Naive thymus-derived CD4-positive, alpha-beta T cell (primary cell): ENCODE measurements at regions of chr6 and their contacts with region 1.

Region 1: GRCh38 chr6:159693128-159693893 is at the start of gene SOD2:
- DNase-seq: peak; percentile 75 to 92 (median 85)
- ATAC-seq: peak; percentile 84
- H3K4me3 ChIP-seq: peak within 1 kb of the TSS; percentile 63
- H3K4me3 Mint-ChIP-seq: peak within 1 kb of the TSS; percentile 74 to 97 (median 94)
- H3K27ac ChIP-seq: peak within 1 kb of the TSS; percentile 90
- H3K27ac Mint-ChIP-seq: peak within 1 kb of the TSS; percentile 94 to 98 (median 97)
- H3K4me1 ChIP-seq: peaks cover 18 to 31% of the 10 kb centered on the region in 2 donors
- H3K4me1 Mint-ChIP-seq: peaks cover 31 to 62% (median 44%) of the 10 kb centered on the region in 7 donors
- H3K27me3 ChIP-seq: no peaks in the 10 kb centered on the region
- H3K27me3 Mint-ChIP-seq: no peaks in the 10 kb centered on the region
- total RNA-seq, gene SOD2: 80.2 to 306 (median 105) TPM

Region 2: GRCh38 chr6:157921685-157922367 is 1771.5 kb before region 1 on chr6:
- CTCF ChIA-PET with region 1: no interaction called
- POLR2A ChIA-PET with region 1: no interaction called
- intact Hi-C with region 1: no loop called
- DNase-seq: no peak
- ATAC-seq: no peak
- H3K4me3 ChIP-seq: no peak overlapping the region
- H3K4me3 Mint-ChIP-seq: no peak overlapping the region
- H3K27ac ChIP-seq: no peak overlapping the region
- H3K27ac Mint-ChIP-seq: no peak overlapping the region
- H3K4me1 ChIP-seq: no peaks in the 10 kb centered on the region
- H3K4me1 Mint-ChIP-seq: peaks cover 0 to 4% (median 0%) of the 10 kb centered on the region in 7 donors
- H3K27me3 ChIP-seq: no peaks in the 10 kb centered on the region
- H3K27me3 Mint-ChIP-seq: no peaks in the 10 kb centered on the region

Region 3: DNA sequence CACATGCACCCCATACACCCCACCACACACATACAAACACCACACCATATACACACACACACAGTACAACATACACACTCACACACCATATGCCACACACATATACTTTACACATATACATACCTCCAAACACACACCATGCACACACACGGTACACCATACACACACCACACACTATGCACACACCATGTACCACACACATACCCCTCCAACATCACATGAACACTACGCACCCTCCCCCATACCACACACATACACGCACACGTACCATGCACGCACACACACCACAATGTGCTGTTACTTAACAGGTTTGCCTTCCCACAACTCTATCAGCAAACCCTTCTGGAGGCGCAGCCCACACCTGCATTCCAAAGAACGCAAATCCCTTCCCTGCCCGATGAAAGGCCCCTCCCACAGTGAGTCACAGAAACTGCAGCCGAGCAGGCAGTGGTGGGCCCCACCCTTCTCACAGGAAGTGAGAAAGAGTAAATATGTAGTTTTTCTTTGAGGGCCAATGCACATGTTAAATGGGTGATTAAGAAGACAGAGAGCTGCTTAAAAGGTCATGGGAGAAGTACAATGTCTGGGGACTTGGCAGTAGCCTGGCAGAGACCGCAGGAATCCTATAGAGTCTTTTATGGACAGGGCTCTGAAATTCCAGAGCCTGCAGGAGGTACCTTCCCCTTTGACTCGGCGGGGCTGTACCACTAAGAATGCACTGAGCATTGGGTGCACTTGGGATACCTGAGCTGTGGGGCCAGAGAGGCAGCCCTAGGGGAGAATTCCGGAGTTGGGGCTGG is 840.0 kb before region 1 on chr6:
- CTCF ChIA-PET with region 1: no interaction called
- POLR2A ChIA-PET with region 1: no interaction called
- intact Hi-C with region 1: loop called in 1 of 2 experiments (anchors 2 kb)
- DNase-seq: peak; percentile 54 to 93 (median 86)
- ATAC-seq: peak; percentile 79
- H3K4me3 ChIP-seq: peak overlapping the region; percentile 55
- H3K4me3 Mint-ChIP-seq: no peak overlapping the region
- H3K27ac ChIP-seq: peak overlapping the region; percentile 83
- H3K27ac Mint-ChIP-seq: no peak overlapping the region
- H3K4me1 ChIP-seq: peaks cover 47 to 55% of the 10 kb centered on the region in 2 donors
- H3K4me1 Mint-ChIP-seq: peaks cover 16 to 42% (median 33%) of the 10 kb centered on the region in 7 donors
- H3K27me3 ChIP-seq: no peaks in the 10 kb centered on the region
- H3K27me3 Mint-ChIP-seq: no peaks in the 10 kb centered on the region

Region 4: DNA sequence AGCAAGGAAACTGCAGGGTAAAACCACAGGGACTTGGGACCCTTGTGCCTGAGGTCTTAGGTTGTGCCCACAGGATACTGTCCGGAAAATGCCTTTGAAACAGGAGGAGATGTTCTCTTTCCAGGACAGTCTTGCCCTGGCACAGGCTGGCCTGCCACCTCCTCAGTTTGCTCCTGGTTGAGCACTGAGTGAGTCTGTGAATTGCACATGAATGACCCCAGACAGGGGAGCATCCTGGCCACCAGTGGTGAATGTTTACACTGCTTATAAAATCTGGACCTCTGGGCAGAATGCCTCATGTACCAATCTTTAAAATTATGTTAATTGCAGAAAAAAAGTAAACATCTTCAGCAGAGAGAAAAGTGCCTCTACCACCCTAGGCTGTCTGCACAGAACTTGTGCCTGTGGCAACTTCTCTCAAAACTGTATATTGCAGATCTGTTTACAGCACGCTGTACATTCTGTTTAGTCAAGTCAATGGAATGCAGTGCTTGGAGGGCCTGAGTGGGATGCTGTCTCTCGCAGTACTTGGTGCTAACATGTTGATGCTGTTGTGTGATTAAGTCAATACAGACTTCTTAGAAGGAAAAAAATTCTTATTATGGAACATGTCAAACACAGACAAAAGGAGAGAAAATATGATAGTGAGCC is 242.4 kb before region 1 on chr6:
- CTCF ChIA-PET with region 1: no interaction called
- POLR2A ChIA-PET with region 1: no interaction called
- intact Hi-C with region 1: no loop called
- DNase-seq: no peak
- ATAC-seq: peak; percentile 12
- H3K4me3 ChIP-seq: no peak overlapping the region
- H3K4me3 Mint-ChIP-seq: no peak overlapping the region
- H3K27ac ChIP-seq: no peak overlapping the region
- H3K27ac Mint-ChIP-seq: no peak overlapping the region
- H3K4me1 ChIP-seq: no peaks in the 10 kb centered on the region
- H3K4me1 Mint-ChIP-seq: no peaks in the 10 kb centered on the region
- H3K27me3 ChIP-seq: no peaks in the 10 kb centered on the region
- H3K27me3 Mint-ChIP-seq: peaks cover 4 to 44% (median 27%) of the 10 kb centered on the region in 5 donors

Region 5: GRCh38 chr6:159633196-159633595 is 60.1 kb before region 1 on chr6:
- CTCF ChIA-PET with region 1: no interaction called
- POLR2A ChIA-PET with region 1: no interaction called
- intact Hi-C with region 1: no loop called
- DNase-seq: no peak
- ATAC-seq: no peak
- H3K4me3 ChIP-seq: no peak overlapping the region
- H3K4me3 Mint-ChIP-seq: no peak overlapping the region
- H3K27ac ChIP-seq: no peak overlapping the region
- H3K27ac Mint-ChIP-seq: no peak overlapping the region
- H3K4me1 ChIP-seq: no peaks in the 10 kb centered on the region
- H3K4me1 Mint-ChIP-seq: no peaks in the 10 kb centered on the region
- H3K27me3 ChIP-seq: no peaks in the 10 kb centered on the region
- H3K27me3 Mint-ChIP-seq: no peaks in the 10 kb centered on the region

Region 6: DNA sequence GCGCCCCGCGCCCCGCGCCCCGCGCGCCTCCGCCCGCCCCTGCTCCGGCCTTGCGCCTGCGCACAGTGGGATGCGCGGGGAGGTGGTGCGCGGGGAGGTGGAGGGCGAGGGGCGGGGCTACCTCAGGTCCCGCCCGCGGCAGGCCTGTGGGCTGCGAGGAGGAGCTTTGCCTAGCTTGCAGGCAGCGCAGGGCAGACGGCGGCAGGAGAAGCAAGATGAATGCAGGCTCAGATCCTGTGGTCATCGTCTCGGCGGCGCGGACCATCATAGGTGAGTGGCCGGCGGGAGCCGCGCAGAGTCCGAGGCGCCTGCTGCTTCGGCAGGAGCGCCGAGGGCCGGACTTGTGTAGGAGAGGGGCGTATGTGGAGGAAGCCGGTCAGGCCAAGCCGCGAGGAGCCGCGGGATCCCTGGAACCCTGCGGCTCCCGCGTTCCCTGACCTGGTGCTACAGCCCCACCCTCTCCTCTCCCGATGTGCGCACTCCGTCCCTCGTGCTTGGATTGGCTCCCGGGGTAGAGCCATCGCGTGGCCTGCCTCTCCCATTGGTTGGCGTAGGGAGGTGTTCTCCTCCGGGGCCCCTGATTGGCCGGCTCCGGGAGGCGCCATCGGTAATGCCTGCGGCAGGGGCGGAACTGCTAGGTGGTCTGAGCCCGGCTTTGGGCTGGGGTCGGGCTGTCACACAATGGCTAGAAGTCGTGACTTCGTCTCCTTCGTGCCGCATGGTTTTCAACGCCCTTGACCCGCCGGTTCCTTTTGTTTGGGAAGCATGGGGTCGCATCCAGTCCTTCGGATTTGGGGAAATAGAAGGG is 68.8 kb after region 1 on chr6 and contains the start of gene ACAT2:
- CTCF ChIA-PET with region 1: interaction called, 3 read pairs
- POLR2A ChIA-PET with region 1: interaction called, 27 read pairs
- intact Hi-C with region 1: loop called (anchors 1 kb)
- DNase-seq: peak; percentile 89 to 95 (median 93)
- ATAC-seq: peak; percentile 94
- H3K4me3 ChIP-seq: peak within 1 kb of the TSS; percentile 99
- H3K4me3 Mint-ChIP-seq: peak within 1 kb of the TSS; percentile 84 to 97 (median 94)
- H3K27ac ChIP-seq: peak within 1 kb of the TSS; percentile 98
- H3K27ac Mint-ChIP-seq: peak within 1 kb of the TSS; percentile 93 to 99 (median 97)
- H3K4me1 ChIP-seq: peaks cover 6 to 15% of the 10 kb centered on the region in 2 donors
- H3K4me1 Mint-ChIP-seq: peaks cover 23 to 49% (median 34%) of the 10 kb centered on the region in 7 donors
- H3K27me3 ChIP-seq: no peaks in the 10 kb centered on the region
- H3K27me3 Mint-ChIP-seq: no peaks in the 10 kb centered on the region
- total RNA-seq, gene ACAT2: 18.5 to 53.9 (median 28.0) TPM

Region 7: DNA sequence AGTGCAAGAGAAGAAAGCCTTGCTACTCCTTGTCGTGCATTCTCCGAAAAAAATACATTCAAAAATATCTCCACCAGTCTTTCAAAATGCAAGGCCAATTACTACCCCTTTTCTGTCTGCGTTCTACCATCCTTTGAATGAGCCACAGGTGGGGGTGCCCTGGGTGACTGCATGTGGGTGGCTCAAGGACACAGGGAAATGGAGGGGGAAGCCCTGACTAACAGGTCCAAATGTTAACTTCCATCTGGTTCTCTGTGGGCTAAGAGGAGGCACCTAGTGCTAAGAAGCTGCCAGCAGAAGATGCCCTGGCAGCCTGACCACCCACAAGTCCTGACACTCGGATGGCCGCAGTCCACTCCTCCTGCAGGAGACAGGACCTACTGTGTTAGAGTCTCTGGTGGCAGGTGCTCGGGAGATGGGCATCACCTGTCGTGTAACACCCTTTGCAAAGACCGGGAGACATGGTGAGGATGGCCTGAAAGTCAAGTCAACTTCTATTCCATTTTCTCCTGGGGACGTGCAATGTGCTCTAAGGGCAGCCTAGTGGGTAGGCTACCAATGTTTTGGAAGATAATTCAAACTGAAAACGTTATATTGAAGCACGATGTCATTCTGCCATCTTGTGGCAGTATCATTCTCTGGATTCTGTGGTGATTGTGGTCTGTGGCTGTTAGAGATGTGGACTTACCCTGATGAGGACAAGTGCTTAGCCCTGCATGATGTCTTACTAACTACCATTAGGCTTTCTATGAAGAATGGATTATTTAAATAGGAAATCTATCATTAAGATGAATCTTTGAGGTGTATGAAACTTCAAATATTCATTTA is 248.2 kb after region 1 on chr6:
- CTCF ChIA-PET with region 1: interaction called, 10 read pairs
- POLR2A ChIA-PET with region 1: no interaction called
- intact Hi-C with region 1: loop called in 1 of 2 experiments (anchors 1 kb)
- DNase-seq: peak in 7 of 9 donors; percentile 23 to 55 (median 40)
- ATAC-seq: peak; percentile 85
- H3K4me3 ChIP-seq: no peak overlapping the region
- H3K4me3 Mint-ChIP-seq: no peak overlapping the region
- H3K27ac ChIP-seq: no peak overlapping the region
- H3K27ac Mint-ChIP-seq: no peak overlapping the region
- H3K4me1 ChIP-seq: no peaks in the 10 kb centered on the region
- H3K4me1 Mint-ChIP-seq: peaks cover 0 to 7% (median 0%) of the 10 kb centered on the region in 7 donors
- H3K27me3 ChIP-seq: no peaks in the 10 kb centered on the region
- H3K27me3 Mint-ChIP-seq: peaks cover 0 to 28% (median 3%) of the 10 kb centered on the region in 5 donors

Region 8: GRCh38 chr6:160013987-160014868 is 320.9 kb after region 1 on chr6:
- CTCF ChIA-PET with region 1: no interaction called
- POLR2A ChIA-PET with region 1: interaction called, 5 read pairs
- intact Hi-C with region 1: loop called (anchors 2 to 5 kb)
- DNase-seq: peak in 7 of 9 donors; percentile 12 to 31 (median 25)
- ATAC-seq: peak; percentile 72
- H3K4me3 ChIP-seq: peak overlapping the region; percentile 24
- H3K4me3 Mint-ChIP-seq: peak overlapping the region; percentile 50 to 86 (median 75)
- H3K27ac ChIP-seq: peak overlapping the region; percentile 52
- H3K27ac Mint-ChIP-seq: peak overlapping the region; percentile 82 to 96 (median 89)
- H3K4me1 ChIP-seq: peaks cover 33 to 39% of the 10 kb centered on the region in 2 donors
- H3K4me1 Mint-ChIP-seq: peaks cover 49 to 82% (median 69%) of the 10 kb centered on the region in 7 donors
- H3K27me3 ChIP-seq: no peaks in the 10 kb centered on the region
- H3K27me3 Mint-ChIP-seq: no peaks in the 10 kb centered on the region

Region 9: DNA sequence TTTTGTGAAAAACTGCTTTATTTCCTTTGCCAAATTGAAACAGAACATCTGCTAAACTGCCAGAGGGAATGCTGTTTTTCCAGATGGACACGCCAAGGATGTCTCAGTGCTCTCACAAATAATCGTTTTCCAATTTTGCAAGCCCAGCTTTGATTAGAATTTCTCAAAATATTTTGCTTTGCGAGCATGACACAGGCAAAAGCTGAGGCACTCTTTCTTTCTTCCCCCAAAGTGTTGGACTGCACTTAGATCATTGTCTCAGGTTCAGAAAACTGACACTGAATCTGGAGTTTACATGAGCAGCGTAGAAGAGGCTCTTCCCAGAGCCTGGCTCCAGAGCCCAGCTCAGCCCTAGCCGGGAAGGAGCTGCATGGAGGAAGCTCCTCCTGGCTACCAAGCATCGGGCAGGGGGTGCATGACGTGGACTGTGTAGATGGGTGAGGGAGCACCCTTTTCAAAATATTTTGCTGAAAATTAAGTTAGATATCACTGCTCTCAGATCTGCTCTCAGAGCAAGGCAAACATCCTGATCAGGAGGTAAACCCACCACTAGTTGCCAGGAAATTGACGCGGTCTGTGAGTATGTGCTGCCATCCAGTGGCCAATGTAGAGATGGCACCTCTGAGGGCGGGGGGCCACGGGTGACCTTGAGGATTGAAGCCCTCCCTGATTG is 762.4 kb after region 1 on chr6:
- CTCF ChIA-PET with region 1: no interaction called
- POLR2A ChIA-PET with region 1: no interaction called
- intact Hi-C with region 1: loop called in 1 of 2 experiments (anchors 1 kb)
- DNase-seq: peak; percentile 54 to 78 (median 70)
- ATAC-seq: peak; percentile 93
- H3K4me3 ChIP-seq: no peak overlapping the region
- H3K4me3 Mint-ChIP-seq: no peak overlapping the region
- H3K27ac ChIP-seq: no peak overlapping the region
- H3K27ac Mint-ChIP-seq: no peak overlapping the region
- H3K4me1 ChIP-seq: peaks cover 29 to 30% of the 10 kb centered on the region in 2 donors
- H3K4me1 Mint-ChIP-seq: peaks cover 0 to 37% (median 27%) of the 10 kb centered on the region in 7 donors
- H3K27me3 ChIP-seq: no peaks in the 10 kb centered on the region
- H3K27me3 Mint-ChIP-seq: peaks cover 0 to 55% (median 5%) of the 10 kb centered on the region in 5 donors